ENCODE measurements at regions of chr14 and their contacts with region 1.

Region 1: GRCh38 chr14:61461808-61462275 is 140.5 kb downstream of the PRKCH start:
- DNase-seq: no peak
- ATAC-seq: peak; percentile 79
- H3K4me3 ChIP-seq: no peak overlapping the region
- H3K27ac ChIP-seq: no peak overlapping the region
- H3K4me1 ChIP-seq: peaks cover 13% of the 10 kb centered on the region
- H3K27me3 ChIP-seq: no peaks in the 10 kb centered on the region
- CTCF ChIP-seq: peak; percentile 78

Region 2: GRCh38 chr14:61537563-61538463 is 76.0 kb after region 1 on chr14:
- intact Hi-C with region 1: loop called (anchors 10 kb)
- DNase-seq: no peak
- ATAC-seq: peak; percentile 89
- H3K4me3 ChIP-seq: no peak overlapping the region
- H3K27ac ChIP-seq: peak overlapping the region; percentile 53
- H3K4me1 ChIP-seq: peaks cover 28% of the 10 kb centered on the region
- H3K27me3 ChIP-seq: no peaks in the 10 kb centered on the region
- CTCF ChIP-seq: no peak

Region 3: DNA sequence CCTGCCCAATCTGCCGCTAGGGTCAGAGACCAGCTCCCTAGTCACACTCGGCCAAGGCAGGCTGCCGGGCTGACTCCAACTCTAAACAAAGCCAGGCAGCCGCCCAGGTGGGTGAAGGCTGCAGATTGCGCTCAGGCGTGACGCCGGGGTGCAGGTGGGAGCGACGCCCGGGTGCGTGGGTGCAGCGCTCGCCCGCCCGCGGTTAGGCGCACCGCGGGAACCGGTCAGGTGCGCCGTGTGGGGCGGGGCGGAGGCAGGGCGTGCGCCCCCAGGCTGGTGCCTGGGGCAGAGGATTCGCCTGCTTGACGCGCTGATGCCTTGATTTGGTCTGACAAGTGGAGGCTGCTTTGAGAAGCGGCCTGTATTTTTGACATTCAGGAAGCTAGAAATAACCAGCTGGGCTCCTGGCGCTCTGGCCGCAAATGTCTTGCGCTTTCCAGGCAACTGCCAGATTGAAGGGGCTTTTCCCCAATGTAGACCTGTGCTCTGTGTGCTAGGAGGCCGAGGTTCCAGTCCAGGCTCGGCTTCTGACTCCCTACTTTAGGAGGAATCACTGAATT is 106.8 kb after region 1 on chr14:
- intact Hi-C with region 1: no loop called
- DNase-seq: peak; percentile 72
- ATAC-seq: peak; percentile 62
- H3K4me3 ChIP-seq: peak overlapping the region; percentile 36
- H3K27ac ChIP-seq: peak overlapping the region; percentile 36
- H3K4me1 ChIP-seq: peaks cover 46% of the 10 kb centered on the region
- H3K27me3 ChIP-seq: no peaks in the 10 kb centered on the region
- CTCF ChIP-seq: no peak

Region 4: DNA sequence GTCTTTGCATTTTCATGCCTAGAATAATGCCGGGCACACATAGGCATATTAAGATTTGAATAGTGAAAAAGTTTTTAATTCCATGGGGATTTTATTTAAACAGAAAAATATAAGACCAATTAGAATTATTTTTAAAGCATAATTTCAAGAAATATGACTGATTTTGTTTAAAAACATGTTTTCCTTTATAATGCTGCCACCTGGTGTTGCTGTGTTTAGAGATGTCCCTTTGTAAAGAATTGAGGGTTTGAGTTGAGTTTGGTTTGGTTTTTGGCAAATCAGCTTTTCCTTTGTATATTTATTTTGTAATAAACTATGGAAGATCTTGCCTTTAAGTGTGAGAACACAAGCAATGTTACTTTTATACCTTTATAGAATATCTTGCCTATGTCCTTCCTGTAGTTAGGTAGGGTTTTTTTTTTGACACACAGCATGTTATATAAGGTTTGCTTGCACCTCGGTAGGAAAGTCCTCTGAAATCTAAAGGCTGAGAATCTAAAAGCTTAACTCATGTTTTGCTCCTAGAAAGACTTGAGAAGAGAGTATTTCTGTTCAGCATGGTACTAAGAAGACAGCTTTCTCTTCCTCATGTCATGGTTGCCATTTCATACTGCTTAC is 269.0 kb after region 1 on chr14:
- intact Hi-C with region 1: loop called (anchors 10 kb)
- DNase-seq: no peak
- ATAC-seq: no peak
- H3K4me3 ChIP-seq: no peak overlapping the region
- H3K27ac ChIP-seq: no peak overlapping the region
- H3K4me1 ChIP-seq: no peaks in the 10 kb centered on the region
- H3K27me3 ChIP-seq: no peaks in the 10 kb centered on the region
- CTCF ChIP-seq: peak; percentile 55

Region 5: DNA sequence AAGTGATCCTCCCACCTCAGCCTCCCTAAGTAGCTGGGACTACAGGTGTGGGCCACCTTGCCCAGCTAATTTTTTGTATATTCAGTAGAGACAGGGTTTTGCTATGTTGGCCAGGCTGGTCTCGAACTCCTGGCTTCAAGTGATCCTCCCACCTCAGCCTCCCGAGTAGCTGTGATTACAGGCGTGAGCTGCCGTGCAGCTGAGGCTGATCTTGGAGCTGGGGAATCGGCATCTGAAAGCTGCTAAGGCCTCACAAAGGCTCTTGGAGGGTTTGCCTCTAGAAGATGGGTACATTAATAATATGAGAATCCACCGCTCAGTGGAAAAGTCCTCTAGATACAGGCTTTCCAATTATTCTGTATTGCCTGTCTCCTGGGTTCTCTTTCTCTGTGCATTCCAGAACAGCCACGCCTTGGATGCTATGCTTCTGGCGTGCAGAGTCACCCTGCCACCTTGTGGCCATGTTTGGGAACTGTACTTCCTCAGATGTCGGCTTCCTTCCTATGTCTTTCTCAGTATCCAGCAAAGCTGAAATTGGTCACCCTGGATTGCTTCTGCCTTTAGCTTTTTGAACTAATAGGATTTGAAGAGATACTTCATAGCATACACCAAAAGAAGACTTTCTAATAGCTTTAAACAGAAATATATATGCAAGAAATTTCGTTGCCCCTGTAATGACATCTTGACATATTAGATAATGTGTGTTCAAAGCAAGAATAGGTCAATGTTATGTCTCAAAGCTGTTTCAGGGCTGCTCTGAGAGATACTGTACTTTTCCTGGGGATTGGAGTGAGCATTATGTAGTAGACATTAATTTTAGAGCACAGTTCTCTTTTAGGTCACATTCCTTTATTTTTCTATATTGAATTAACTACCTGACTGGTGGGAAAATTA is 375.7 kb after region 1 on chr14:
- intact Hi-C with region 1: loop called (anchors 5 kb)
- DNase-seq: peak; percentile 76
- ATAC-seq: peak; percentile 100
- H3K4me3 ChIP-seq: no peak overlapping the region
- H3K27ac ChIP-seq: no peak overlapping the region
- H3K4me1 ChIP-seq: no peaks in the 10 kb centered on the region
- H3K27me3 ChIP-seq: no peaks in the 10 kb centered on the region
- CTCF ChIP-seq: peak; percentile 95